HepG2 (cell line): ENCODE measurements at regions of chr5 and their contacts with region 1.

Region 1: DNA sequence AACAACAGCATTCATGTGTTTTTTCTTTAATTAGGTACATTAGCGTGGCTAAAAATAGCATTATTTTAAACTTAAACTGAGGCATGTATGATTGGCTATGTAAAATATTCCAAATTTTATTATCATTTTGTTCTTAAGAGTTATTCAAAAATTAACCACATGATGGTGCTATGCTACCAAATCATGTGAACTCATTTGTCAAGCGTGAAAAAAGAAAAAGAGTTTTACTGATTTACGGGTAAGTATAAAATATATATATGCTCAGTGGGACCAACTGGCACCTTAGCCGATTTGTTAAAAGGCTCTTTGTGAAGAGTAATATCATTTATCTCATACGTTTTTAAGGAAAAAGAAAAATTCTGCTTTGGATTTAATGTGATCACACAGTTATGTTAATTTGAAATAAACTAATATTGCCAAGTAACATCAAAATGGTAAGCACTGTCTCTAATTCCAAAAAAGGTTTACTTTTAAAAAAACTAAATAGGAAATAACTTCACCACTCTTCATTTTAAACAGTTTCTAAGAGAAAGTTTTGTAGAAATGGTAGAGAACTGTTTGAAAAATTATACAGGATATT is 1042.3 kb downstream of the CDH12 start:
- DNase-seq: peak; percentile 8
- ATAC-seq: no peak
- H3K4me3 ChIP-seq: no peak overlapping the region
- H3K27ac ChIP-seq: no peak overlapping the region
- H3K4me1 ChIP-seq: no peaks in the 10 kb centered on the region
- H3K27me3 ChIP-seq: no peaks in the 10 kb centered on the region
- CTCF ChIP-seq: peak; percentile 31; the same call in 1 of the 2 replicates
- EP300 ChIP-seq: no peak
- POLR2A ChIP-seq: no peak
- RAD21 ChIP-seq: no peak

Region 2: GRCh38 chr5:21254161-21254560 is 556.7 kb before region 1 on chr5:
- CTCF ChIA-PET with region 1: no interaction called
- POLR2A ChIA-PET with region 1: no interaction called
- in situ Hi-C with region 1: no loop called
- intact Hi-C with region 1: no loop called
- DNase-seq: no peak
- ATAC-seq: no peak
- H3K4me3 ChIP-seq: no peak overlapping the region
- H3K27ac ChIP-seq: no peak overlapping the region
- H3K4me1 ChIP-seq: no peaks in the 10 kb centered on the region
- H3K27me3 ChIP-seq: no peaks in the 10 kb centered on the region
- CTCF ChIP-seq: no peak
- EP300 ChIP-seq: no peak
- POLR2A ChIP-seq: no peak
- RAD21 ChIP-seq: no peak

Region 3: DNA sequence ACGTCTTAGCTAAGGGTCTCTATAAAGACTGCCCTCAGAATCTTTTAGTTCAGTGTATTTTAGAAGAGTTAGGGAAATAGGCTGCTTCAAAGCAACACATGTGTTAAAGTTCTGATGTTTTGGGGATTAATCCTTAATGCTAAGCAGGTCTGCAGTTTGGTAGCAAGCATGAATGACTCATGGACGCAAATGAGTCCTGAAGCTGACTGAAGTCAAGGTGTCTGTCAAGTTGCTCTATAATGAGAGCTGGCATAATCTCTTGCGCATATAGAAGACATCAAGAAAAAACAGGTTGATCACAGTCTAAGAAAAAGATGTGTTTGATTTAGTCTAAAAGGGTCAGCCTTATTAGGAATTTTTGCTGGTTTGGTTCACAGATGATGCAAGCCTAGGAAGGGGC is 412.3 kb after region 1 on chr5:
- CTCF ChIA-PET with region 1: no interaction called
- POLR2A ChIA-PET with region 1: no interaction called
- in situ Hi-C with region 1: loop called (anchors 10 kb)
- intact Hi-C with region 1: no loop called
- DNase-seq: no peak
- ATAC-seq: no peak
- H3K4me3 ChIP-seq: no peak overlapping the region
- H3K27ac ChIP-seq: no peak overlapping the region
- H3K4me1 ChIP-seq: no peaks in the 10 kb centered on the region
- H3K27me3 ChIP-seq: no peaks in the 10 kb centered on the region
- CTCF ChIP-seq: no peak
- EP300 ChIP-seq: no peak
- POLR2A ChIP-seq: no peak
- RAD21 ChIP-seq: no peak